Activated CD4-positive, alpha-beta T cell treated with anti-CD3 and anti-CD28 coated beads for 36 hours (primary cell): ENCODE measurements at regions of chr3 and their contacts with region 1.

Region 1: GRCh38 chr3:128487813-128488635 is 5.0 kb downstream of the GATA2 start:
- DNase-seq: peak; percentile 64
- ATAC-seq: peak; percentile 49
- H3K4me3 Mint-ChIP-seq: peak overlapping the region; percentile 70
- H3K27ac Mint-ChIP-seq: no peak overlapping the region
- H3K4me1 Mint-ChIP-seq: peaks cover 31% of the 10 kb centered on the region
- H3K27me3 Mint-ChIP-seq: peaks cover 63% of the 10 kb centered on the region

Region 2: DNA sequence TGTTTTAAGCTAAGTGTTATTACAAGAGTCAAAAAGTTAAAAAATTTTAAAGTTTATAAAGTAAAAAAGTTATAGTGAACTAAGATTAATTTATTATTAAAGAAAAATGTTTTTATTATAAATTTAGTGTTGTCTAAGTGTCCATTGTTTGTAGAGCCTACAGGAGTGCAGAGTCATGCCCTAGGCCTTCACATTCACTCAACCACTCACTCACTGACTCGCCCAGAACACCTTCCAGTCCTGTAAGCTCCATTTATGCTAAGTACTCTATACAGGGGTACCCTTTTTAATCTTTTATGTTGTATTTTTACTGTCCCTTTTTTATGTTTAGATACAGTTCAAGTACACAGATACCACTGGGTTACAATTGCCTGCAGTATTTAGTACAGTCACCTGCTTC is 297.5 kb before region 1 on chr3:
- CTCF ChIA-PET with region 1: no interaction called
- POLR2A ChIA-PET with region 1: no interaction called
- intact Hi-C with region 1: no loop called
- DNase-seq: no peak
- ATAC-seq: no peak
- H3K4me3 Mint-ChIP-seq: no peak overlapping the region
- H3K27ac Mint-ChIP-seq: no peak overlapping the region
- H3K4me1 Mint-ChIP-seq: peaks cover 10% of the 10 kb centered on the region
- H3K27me3 Mint-ChIP-seq: no peaks in the 10 kb centered on the region

Region 3: DNA sequence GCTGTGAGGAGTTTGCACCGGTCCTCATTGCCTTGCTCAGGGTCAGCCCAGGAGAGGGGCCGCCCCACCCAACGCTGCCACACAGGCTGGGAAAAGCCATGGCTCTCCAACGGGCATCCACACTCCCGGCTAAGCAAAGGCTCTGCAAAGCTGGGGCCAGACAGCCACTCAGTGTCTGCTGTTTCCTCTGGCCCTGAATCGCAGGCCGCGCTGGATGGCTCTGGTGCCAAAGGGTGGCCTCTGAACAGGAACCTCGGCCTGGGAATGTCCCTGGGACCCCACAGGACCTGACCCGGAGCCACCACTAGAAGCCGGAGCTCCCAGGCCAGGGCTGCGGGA is 119.7 kb after region 1 on chr3:
- CTCF ChIA-PET with region 1: interaction called, 3 read pairs
- POLR2A ChIA-PET with region 1: no interaction called
- intact Hi-C with region 1: loop called in 1 of 2 experiments (anchors 2 kb)
- DNase-seq: no peak
- ATAC-seq: no peak
- H3K4me3 Mint-ChIP-seq: no peak overlapping the region
- H3K27ac Mint-ChIP-seq: no peak overlapping the region
- H3K4me1 Mint-ChIP-seq: no peaks in the 10 kb centered on the region
- H3K27me3 Mint-ChIP-seq: no peaks in the 10 kb centered on the region

Region 4: GRCh38 chr3:129723558-129724324 is 1235.7 kb after region 1 on chr3:
- CTCF ChIA-PET with region 1: no interaction called
- POLR2A ChIA-PET with region 1: interaction called, 11 read pairs
- intact Hi-C with region 1: no loop called
- DNase-seq: no peak
- ATAC-seq: no peak
- H3K4me3 Mint-ChIP-seq: no peak overlapping the region
- H3K27ac Mint-ChIP-seq: no peak overlapping the region
- H3K4me1 Mint-ChIP-seq: peaks cover 4% of the 10 kb centered on the region
- H3K27me3 Mint-ChIP-seq: no peaks in the 10 kb centered on the region